Dendritic cell treated with granulocyte-macrophage colony-stimulating factor and Interleukin-4, amounts not matched to agents 40 ng/mL and 50 ng/mL, for 4 days (primary cell): ENCODE measurements at regions of chr10 and their contacts with region 1.

Region 1: DNA sequence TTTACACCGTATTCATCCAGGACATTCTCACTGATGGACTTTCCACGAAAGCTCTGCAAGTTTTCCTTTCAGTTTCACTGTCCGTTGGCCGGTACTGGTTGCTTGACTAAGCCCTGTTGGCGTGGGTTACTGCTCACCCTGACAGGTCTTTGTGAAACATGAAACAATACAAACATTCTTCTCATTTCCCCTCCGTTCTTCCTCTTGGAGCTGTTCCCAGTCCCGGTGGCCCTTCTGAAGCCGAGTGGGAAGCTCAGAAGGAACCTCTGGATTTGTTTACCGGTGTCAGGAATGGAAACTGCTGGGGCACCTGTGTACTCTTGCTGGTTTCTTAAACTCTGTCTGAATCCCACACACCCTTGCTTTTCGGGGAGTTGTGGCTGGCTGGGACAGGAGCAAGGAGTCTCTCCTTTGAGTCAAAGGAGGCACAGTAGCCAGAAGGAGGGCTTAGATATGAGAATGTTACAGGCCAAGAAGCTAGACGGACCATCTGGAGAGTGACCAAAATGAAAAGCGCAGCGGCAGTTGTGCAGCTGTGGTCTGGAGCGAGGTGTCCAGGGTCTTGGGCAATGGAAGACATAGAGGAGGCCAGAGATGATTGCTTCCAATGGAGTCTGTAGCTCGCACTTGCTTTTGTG is 45.7 kb downstream of the LYZL2 start:
- H3K4me3 Mint-ChIP-seq: peak overlapping the region; percentile 47
- H3K27ac Mint-ChIP-seq: peak overlapping the region; percentile 78
- H3K4me1 Mint-ChIP-seq: peaks cover 26% of the 10 kb centered on the region
- H3K27me3 Mint-ChIP-seq: no peaks in the 10 kb centered on the region

Region 2: GRCh38 chr10:30534465-30535144 is 49.3 kb before region 1 on chr10:
- intact Hi-C with region 1: loop called (anchors 5 kb)
- H3K4me3 Mint-ChIP-seq: no peak overlapping the region
- H3K27ac Mint-ChIP-seq: peak overlapping the region; percentile 29
- H3K4me1 Mint-ChIP-seq: peaks cover 61% of the 10 kb centered on the region
- H3K27me3 Mint-ChIP-seq: no peaks in the 10 kb centered on the region

Region 3: GRCh38 chr10:30542001-30542894 is 41.6 kb before region 1 on chr10:
- intact Hi-C with region 1: loop called (anchors 5 kb)
- H3K4me3 Mint-ChIP-seq: no peak overlapping the region
- H3K27ac Mint-ChIP-seq: peak overlapping the region; percentile 70
- H3K4me1 Mint-ChIP-seq: peaks cover 65% of the 10 kb centered on the region
- H3K27me3 Mint-ChIP-seq: no peaks in the 10 kb centered on the region